Mammary epithelial cell (primary cell): ENCODE measurements at regions of chr1 and their contacts with region 1.

Region 1: GRCh38 chr1:210584439-210585113 is 255.9 kb downstream of the HHAT start:
- DNase-seq: peak; percentile 62
- H3K4me3 ChIP-seq: no peak overlapping the region
- H3K27ac ChIP-seq: no peak overlapping the region
- H3K4me1 ChIP-seq: no peaks in the 10 kb centered on the region
- H3K27me3 ChIP-seq: no peaks in the 10 kb centered on the region
- CTCF ChIP-seq: peak; percentile 75 to 78

Region 2: DNA sequence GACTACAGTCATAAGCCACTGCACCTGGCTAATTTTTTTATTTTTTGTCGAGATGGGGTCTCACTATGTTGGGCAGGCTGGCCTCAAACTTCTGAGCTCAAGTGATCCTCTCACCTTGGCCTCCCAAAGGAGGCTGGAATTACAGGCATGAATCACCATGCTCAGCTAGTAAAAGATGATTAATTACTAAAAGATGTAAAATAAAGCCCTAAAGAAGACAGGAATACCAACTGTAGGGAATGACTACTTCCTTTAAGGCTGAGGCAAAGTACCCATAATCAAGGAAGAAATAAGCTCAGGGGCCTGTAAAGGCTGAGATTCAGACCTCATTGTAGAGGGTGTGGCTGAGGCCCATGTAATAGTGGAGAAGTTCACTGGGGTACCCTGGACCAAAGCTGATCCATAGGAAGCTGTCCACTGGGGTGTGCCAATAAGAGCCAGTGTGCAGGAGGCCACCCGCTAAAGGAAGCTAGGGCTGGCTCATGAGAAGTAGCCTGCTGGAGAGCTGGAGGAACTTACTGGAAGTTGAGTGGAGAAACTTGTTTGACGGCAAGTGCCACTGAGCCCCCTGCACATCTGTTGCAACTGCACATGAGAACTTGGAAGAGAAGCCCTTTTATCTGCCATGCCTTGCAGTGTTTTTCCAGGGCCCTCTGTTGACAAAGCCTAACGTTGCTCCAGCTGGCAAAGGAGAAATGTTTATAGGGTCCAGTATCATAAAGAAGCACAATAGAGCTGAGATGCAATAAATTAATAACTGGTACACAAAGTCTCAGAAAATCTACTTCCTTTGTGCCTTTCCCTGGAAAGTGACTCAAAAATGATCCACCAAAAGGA is 369.8 kb before region 1 on chr1:
- CTCF ChIA-PET with region 1: no interaction called
- dilution Hi-C with region 1: no loop called
- in situ Hi-C with region 1: no loop called
- intact Hi-C with region 1: no loop called
- DNase-seq: no peak
- H3K4me3 ChIP-seq: no peak overlapping the region
- H3K27ac ChIP-seq: no peak overlapping the region
- H3K4me1 ChIP-seq: no peaks in the 10 kb centered on the region
- H3K27me3 ChIP-seq: no peaks in the 10 kb centered on the region
- CTCF ChIP-seq: no peak

Region 3: DNA sequence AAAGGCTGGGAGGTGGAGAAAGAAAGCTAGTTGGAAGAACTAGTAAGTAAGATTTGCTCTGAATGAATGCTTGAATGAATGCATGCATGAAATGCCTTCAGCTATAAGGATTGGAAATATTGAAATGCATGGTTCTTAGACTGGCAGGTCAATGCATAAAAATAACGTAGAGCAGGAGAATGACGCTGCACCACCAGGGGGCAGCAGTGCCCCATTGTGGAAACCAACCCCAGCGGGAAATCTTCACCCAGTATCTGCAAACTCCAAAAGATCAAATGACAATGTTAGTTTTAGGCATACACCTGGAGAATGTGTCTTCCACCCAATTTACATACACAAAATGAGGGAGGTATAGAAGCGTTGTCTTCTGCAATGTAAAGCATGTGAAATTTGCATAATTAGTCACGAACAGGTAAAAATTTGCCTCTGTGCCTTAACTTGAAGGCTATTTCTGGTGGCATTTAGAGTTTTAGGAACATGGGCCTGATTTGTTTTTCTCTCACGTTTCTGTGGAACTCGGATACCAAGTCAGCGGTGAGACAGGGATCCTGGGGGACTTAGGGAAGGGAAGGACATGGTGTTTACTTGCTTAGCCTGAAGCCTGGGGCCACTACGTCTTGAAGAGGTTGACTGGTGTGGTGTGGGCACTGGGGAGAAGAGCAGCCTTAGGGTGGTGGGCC is 177.2 kb before region 1 on chr1:
- CTCF ChIA-PET with region 1: no interaction called
- dilution Hi-C with region 1: no loop called
- in situ Hi-C with region 1: no loop called
- intact Hi-C with region 1: loop called (anchors 1 kb)
- DNase-seq: peak; percentile 50
- H3K4me3 ChIP-seq: no peak overlapping the region
- H3K27ac ChIP-seq: no peak overlapping the region
- H3K4me1 ChIP-seq: peaks cover 21% of the 10 kb centered on the region
- H3K27me3 ChIP-seq: no peaks in the 10 kb centered on the region
- CTCF ChIP-seq: peak; percentile 96 to 99

Region 4: GRCh38 chr1:210448297-210448892 is 136.2 kb before region 1 on chr1:
- CTCF ChIA-PET with region 1: no interaction called
- dilution Hi-C with region 1: no loop called
- in situ Hi-C with region 1: no loop called
- intact Hi-C with region 1: loop called (anchors 2 kb)
- DNase-seq: peak; percentile 18
- H3K4me3 ChIP-seq: no peak overlapping the region
- H3K27ac ChIP-seq: no peak overlapping the region
- H3K4me1 ChIP-seq: no peaks in the 10 kb centered on the region
- H3K27me3 ChIP-seq: no peaks in the 10 kb centered on the region
- CTCF ChIP-seq: peak; percentile 63 to 68

Region 5: GRCh38 chr1:210633636-210634035 is 49.1 kb after region 1 on chr1:
- CTCF ChIA-PET with region 1: no interaction called
- dilution Hi-C with region 1: no loop called
- in situ Hi-C with region 1: no loop called
- intact Hi-C with region 1: no loop called
- DNase-seq: no peak
- H3K4me3 ChIP-seq: no peak overlapping the region
- H3K27ac ChIP-seq: no peak overlapping the region
- H3K4me1 ChIP-seq: no peaks in the 10 kb centered on the region
- H3K27me3 ChIP-seq: no peaks in the 10 kb centered on the region
- CTCF ChIP-seq: no peak

Region 6: DNA sequence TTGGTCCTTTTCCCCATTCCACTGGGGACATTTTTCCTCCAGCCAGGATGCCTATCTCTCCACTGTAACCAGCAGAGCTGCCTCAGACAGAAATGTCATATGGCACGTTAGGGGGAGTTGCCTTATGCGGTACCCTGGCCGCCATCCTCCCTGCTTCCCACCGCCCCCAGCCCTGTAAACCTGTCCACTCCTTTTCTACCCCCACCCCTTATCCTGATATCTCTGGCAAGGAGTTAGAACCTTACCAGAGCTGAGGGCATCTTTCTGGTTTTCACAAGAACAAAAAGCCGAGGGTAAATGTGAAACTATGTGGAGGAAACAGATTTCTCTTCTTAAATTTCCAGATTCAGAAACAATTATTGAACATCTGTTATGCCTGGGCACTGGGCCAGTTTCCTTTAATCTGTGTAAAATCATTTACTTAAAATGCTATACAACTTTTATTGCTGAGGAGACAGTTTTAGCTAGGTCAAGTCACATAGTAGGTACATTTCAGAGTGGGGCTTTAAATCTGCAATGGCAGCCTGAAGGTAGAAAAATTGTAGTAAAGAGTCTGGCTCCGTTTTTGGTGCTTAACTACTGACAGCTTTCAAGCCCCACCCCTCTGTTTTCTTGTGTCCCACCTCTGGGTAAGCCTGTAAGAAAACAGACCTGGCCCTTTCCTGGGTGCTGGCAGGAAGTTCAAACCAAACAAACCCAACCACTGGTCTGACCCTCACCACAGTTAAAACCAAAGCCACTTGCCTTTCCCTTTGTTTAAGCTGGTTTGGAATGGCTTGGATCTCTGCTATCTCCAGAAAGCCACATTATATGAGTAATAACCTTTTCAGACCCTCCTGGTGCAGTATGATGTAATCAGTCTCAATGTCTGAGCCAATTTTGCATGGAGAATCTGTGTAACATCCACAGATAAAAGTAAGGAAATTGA is 63.1 kb after region 1 on chr1:
- CTCF ChIA-PET with region 1: no interaction called
- dilution Hi-C with region 1: no loop called
- in situ Hi-C with region 1: no loop called
- intact Hi-C with region 1: loop called (anchors 1 kb)
- DNase-seq: no peak
- H3K4me3 ChIP-seq: no peak overlapping the region
- H3K27ac ChIP-seq: no peak overlapping the region
- H3K4me1 ChIP-seq: no peaks in the 10 kb centered on the region
- H3K27me3 ChIP-seq: peaks cover 2% of the 10 kb centered on the region
- CTCF ChIP-seq: no peak

Region 7: GRCh38 chr1:210951279-210951678 is 366.7 kb after region 1 on chr1:
- CTCF ChIA-PET with region 1: no interaction called
- dilution Hi-C with region 1: no loop called
- in situ Hi-C with region 1: no loop called
- intact Hi-C with region 1: loop called (anchors 1 kb)
- DNase-seq: no peak
- H3K4me3 ChIP-seq: no peak overlapping the region
- H3K27ac ChIP-seq: no peak overlapping the region
- H3K4me1 ChIP-seq: no peaks in the 10 kb centered on the region
- H3K27me3 ChIP-seq: peaks cover 1% of the 10 kb centered on the region
- CTCF ChIP-seq: no peak

Region 8: DNA sequence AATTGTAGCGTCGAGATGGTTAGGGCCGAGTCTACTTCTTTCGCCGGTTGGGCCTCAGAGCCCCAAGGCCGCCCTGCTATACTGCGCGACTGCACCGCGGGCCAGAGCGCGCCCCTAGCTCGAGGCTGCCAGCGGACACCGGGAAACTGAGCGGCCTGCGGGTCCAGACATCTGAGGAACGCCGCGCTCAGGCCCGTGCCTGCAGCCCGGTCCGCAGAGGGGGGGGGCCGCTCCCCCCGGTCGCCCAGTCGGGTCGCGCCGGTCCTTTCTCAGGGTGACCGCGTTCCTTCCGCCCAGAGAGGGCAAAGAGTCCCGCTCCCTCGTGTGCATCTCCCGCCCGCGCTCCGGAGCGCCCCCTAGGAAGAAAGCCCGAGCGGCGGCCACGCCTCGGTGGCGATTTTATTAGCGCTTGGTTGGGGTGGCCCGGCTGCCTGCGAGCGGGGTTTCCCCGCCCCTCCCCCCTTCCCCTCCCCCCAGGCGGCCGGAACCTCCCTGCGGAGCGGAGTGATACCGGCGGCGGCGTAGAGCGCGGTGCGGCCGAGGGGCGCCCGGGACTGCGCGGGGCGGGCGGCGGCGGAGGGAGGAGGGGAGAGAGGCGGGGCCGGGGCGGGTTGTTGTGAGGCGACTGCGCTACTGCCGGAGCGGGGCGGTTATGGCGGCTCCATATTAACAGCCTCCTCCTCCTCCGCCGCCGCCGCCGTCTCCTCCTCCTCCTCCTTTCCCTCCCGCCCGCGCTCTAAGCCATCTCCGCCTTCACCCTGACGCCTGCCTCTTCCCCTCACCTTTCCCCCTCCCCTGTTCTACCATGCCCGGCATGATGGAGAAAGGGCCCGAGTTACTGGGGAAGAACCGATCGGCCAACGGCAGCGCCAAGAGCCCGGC is 674.4 kb after region 1 on chr1 and contains the start of gene RCOR3:
- CTCF ChIA-PET with region 1: no interaction called
- dilution Hi-C with region 1: no loop called
- in situ Hi-C with region 1: no loop called
- intact Hi-C with region 1: loop called (anchors 5 kb)
- DNase-seq: peak; percentile 90
- H3K4me3 ChIP-seq: peak within 1 kb of the TSS; percentile 97 to 99 (median 97)
- H3K27ac ChIP-seq: peak within 1 kb of the TSS; percentile 87
- H3K4me1 ChIP-seq: peaks cover 18% of the 10 kb centered on the region
- H3K27me3 ChIP-seq: no peaks in the 10 kb centered on the region
- CTCF ChIP-seq: peak; percentile 31 to 65
- total RNA-seq, gene RCOR3: 32.8 to 34.5 TPM

Region 9: GRCh38 chr1:211654838-211655787 is 1070.5 kb after region 1 on chr1:
- CTCF ChIA-PET with region 1: no interaction called
- dilution Hi-C with region 1: no loop called
- in situ Hi-C with region 1: no loop called
- intact Hi-C with region 1: loop called (anchors 10 kb)
- DNase-seq: peak; percentile 68
- H3K4me3 ChIP-seq: no peak overlapping the region
- H3K27ac ChIP-seq: no peak overlapping the region
- H3K4me1 ChIP-seq: peaks cover 13% of the 10 kb centered on the region
- H3K27me3 ChIP-seq: no peaks in the 10 kb centered on the region
- CTCF ChIP-seq: peak; percentile 86 to 97